ENCODE measurements at regions of chr10 and their contacts with region 1.

Region 1: DNA sequence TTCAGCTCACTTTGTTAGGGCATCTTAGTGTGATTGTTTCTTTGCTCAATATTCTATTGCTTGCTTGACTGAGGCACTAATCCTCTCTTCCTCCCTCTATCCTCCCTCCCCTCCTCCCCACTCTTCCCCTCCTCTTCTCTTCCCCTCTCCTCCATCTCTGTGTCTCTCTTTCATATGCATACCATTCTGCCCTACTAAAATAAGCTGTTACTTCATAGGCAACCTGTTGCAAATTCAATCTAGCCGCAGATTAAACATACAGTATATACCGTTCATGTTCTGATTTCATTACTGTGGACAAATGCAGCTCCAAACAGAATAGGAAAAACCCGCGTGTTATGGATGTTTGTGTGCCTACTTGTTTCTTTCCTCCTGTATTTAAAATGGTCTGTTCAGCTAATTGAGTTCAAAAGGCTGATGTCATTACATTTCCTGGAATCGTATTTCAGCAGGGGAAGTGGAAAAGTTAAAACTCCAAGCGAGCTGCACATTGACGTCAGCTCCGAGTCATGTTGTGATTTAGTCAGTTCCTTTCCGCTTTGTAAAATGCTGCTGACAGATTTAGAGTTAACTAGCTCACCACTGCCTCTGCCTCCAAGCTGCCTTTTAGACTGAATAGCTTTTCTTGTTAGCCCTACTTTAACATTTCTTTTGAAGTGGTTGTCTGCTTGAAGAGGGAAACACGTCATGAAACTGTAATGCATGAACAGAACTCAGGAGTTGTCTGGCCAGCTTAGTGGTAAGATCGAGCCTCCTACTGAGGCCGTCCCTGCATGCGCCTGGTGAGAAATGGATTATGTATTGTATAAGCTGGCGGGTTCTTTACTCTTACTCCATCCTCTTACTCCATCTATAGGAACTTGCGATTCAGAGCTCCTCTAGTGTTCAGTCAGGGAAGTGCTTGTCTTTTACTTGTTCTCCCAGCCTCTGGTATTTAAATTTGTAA is 69.0 kb downstream of the CREM start:
- DNase-seq: peak; percentile 89
- H3K4me3 Mint-ChIP-seq: peak overlapping the region; percentile 91
- H3K27ac Mint-ChIP-seq: peak overlapping the region; percentile 100
- H3K4me1 Mint-ChIP-seq: peaks cover 44% of the 10 kb centered on the region
- H3K27me3 Mint-ChIP-seq: no peaks in the 10 kb centered on the region

Region 2: GRCh38 chr10:34994565-34995142 is 201.0 kb before region 1 on chr10:
- CTCF ChIA-PET with region 1: interaction called, 17 read pairs
- POLR2A ChIA-PET with region 1: interaction called, 3 read pairs
- intact Hi-C with region 1: loop called (anchors 1 kb)
- DNase-seq: peak; percentile 69
- H3K4me3 Mint-ChIP-seq: no peak overlapping the region
- H3K27ac Mint-ChIP-seq: no peak overlapping the region
- H3K4me1 Mint-ChIP-seq: peaks cover 11% of the 10 kb centered on the region
- H3K27me3 Mint-ChIP-seq: no peaks in the 10 kb centered on the region

Region 3: DNA sequence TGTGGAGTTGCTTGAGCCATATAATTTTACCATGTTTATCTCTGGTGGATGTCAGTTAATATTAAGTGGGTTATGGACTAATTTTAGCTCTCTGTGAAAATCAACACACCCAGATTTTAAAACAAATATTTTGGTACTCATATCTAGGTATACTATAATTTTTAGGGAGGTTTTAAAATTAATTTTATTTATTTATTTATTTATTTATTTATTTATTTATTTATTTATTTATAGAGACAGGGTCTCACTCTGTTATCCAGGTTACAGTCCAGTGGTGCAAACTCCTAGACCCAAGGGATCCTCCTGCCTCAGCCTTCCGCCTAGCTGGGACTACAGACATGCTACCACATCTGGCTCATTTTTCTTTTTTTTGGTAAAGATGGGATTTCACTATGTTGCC is 76.3 kb before region 1 on chr10:
- CTCF ChIA-PET with region 1: interaction called, 223 read pairs
- POLR2A ChIA-PET with region 1: interaction called, 10 read pairs
- intact Hi-C with region 1: no loop called
- DNase-seq: no peak
- H3K4me3 Mint-ChIP-seq: no peak overlapping the region
- H3K27ac Mint-ChIP-seq: no peak overlapping the region
- H3K4me1 Mint-ChIP-seq: peaks cover 11% of the 10 kb centered on the region
- H3K27me3 Mint-ChIP-seq: no peaks in the 10 kb centered on the region

Region 4: DNA sequence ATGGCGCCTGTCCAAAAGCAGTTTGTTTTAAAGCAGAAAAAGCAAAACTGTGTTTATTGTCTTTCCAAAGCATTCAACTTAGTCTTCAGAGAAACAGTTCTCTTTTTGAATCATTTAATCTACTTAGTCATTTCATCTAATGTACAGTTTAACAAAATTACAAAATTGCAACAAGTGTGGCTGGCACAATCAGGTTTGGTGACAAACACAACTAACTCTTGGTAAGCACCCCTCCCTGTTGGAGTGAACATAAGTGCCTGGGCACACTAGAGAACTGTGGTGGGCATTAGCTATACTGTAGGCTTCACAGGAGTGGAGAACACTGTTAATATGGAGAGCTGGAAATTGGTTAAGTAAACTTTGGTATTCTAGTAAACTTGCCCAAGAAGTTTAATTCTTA is 62.0 kb before region 1 on chr10:
- CTCF ChIA-PET with region 1: interaction called, 223 read pairs
- POLR2A ChIA-PET with region 1: interaction called, 154 read pairs
- intact Hi-C with region 1: loop called (anchors 1 kb)
- DNase-seq: peak; percentile 27
- H3K4me3 Mint-ChIP-seq: peak overlapping the region; percentile 37
- H3K27ac Mint-ChIP-seq: peak overlapping the region; percentile 74
- H3K4me1 Mint-ChIP-seq: peaks cover 59% of the 10 kb centered on the region
- H3K27me3 Mint-ChIP-seq: no peaks in the 10 kb centered on the region

Region 5: GRCh38 chr10:35182629-35183510 is 12.8 kb before region 1 on chr10:
- CTCF ChIA-PET with region 1: interaction called, 20 read pairs
- POLR2A ChIA-PET with region 1: interaction called, 3 read pairs
- intact Hi-C with region 1: no loop called
- DNase-seq: no peak
- H3K4me3 Mint-ChIP-seq: no peak overlapping the region
- H3K27ac Mint-ChIP-seq: no peak overlapping the region
- H3K4me1 Mint-ChIP-seq: peaks cover 4% of the 10 kb centered on the region
- H3K27me3 Mint-ChIP-seq: no peaks in the 10 kb centered on the region

Region 6: DNA sequence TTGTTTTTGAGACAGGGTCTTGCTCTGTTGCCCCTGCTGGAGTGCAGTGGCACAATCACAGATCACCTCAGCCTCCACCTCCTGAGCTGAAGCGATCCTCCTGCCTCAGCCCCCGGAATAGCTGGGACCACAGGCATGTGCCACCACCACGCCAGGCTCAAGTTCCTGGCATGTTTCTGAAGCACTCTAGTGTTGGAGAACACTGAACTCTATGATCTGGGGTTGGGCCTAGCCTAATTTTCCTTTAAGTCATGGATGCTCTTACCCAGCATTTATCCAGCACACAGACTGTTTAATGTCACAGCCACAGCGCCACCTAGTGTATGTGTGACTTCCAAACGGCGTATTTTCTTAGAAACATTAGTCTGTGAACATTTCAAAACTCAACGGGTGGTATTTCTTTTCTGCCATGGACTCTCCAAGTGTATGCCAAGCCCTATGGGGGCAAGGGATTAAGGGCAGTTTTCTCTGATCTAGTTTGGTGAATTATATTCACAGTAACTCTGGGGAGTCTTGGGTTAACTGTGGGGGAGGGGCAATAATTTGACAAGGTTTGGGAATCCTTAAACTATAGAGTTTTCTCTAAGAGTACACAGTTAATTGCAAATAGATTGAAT is 22.8 kb after region 1 on chr10:
- CTCF ChIA-PET with region 1: interaction called, 56 read pairs
- POLR2A ChIA-PET with region 1: interaction called, 16 read pairs
- intact Hi-C with region 1: loop called (anchors 1 kb)
- DNase-seq: peak; percentile 90
- H3K4me3 Mint-ChIP-seq: peak overlapping the region; percentile 43
- H3K27ac Mint-ChIP-seq: peak overlapping the region; percentile 81
- H3K4me1 Mint-ChIP-seq: peaks cover 48% of the 10 kb centered on the region
- H3K27me3 Mint-ChIP-seq: no peaks in the 10 kb centered on the region

Region 7: DNA sequence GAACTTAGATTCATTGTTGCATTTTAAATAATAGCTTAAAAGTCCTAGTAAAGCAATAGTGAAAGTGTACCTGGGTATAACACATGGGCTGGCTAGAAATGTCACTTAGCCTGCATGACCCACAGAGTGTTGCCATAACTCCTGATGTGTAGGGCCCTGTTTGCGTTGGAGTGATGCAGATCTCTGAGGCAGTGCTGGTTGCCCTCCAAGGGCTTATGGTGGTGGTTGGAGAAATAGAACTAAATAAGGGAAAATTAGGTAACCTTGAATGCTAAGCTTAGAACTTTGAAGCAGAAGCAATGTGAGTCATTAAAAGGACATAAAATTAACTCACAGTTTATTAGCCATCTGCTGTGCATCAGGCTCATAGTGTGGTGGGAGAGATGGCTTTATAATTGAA is 246.4 kb after region 1 on chr10:
- CTCF ChIA-PET with region 1: no interaction called
- POLR2A ChIA-PET with region 1: no interaction called
- intact Hi-C with region 1: loop called (anchors 2 kb)
- DNase-seq: peak; percentile 43
- H3K4me3 Mint-ChIP-seq: peak overlapping the region; percentile 16
- H3K27ac Mint-ChIP-seq: peak overlapping the region; percentile 87
- H3K4me1 Mint-ChIP-seq: peaks cover 48% of the 10 kb centered on the region
- H3K27me3 Mint-ChIP-seq: no peaks in the 10 kb centered on the region